PC-3 (cell line): ENCODE measurements at regions of chr6 and their contacts with region 1.

Region 1: GRCh38 chr6:3742426-3743344 is 8.8 kb downstream of the PXDC1 start:
- DNase-seq: peak; percentile 91
- ATAC-seq: peak; percentile 83
- H3K4me3 ChIP-seq: peak overlapping the region; percentile 58
- H3K27ac ChIP-seq: no peak overlapping the region
- H3K4me1 ChIP-seq: peaks cover 27% of the 10 kb centered on the region
- H3K27me3 ChIP-seq: no peaks in the 10 kb centered on the region
- CTCF ChIP-seq: peak; percentile 98

Region 2: DNA sequence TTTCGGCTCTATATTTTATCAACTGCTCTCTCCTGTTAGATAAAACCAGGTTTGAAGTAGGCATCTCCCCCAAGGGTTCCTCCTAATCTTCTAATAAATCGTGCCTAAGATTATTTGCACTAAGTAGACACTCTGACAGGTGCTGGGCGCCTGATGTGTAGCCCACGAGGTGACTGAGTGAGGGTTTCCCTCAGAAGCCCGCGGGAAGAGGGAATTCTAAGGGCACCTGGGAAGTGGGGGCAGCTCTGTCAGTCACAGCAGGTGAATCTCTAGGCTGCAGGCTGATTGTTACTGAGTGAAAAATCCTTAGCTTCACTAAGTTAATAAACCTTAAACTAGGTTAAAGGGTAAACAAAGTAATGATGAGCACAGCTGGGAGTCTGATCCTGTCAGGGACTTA is 59.4 kb before region 1 on chr6:
- CTCF ChIA-PET with region 1: no interaction called
- POLR2A ChIA-PET with region 1: no interaction called
- intact Hi-C with region 1: no loop called
- DNase-seq: no peak
- ATAC-seq: no peak
- H3K4me3 ChIP-seq: no peak overlapping the region
- H3K27ac ChIP-seq: no peak overlapping the region
- H3K4me1 ChIP-seq: no peaks in the 10 kb centered on the region
- H3K27me3 ChIP-seq: peaks cover 4% of the 10 kb centered on the region; the same call in 1 of the 2 replicates
- CTCF ChIP-seq: no peak

Region 3: DNA sequence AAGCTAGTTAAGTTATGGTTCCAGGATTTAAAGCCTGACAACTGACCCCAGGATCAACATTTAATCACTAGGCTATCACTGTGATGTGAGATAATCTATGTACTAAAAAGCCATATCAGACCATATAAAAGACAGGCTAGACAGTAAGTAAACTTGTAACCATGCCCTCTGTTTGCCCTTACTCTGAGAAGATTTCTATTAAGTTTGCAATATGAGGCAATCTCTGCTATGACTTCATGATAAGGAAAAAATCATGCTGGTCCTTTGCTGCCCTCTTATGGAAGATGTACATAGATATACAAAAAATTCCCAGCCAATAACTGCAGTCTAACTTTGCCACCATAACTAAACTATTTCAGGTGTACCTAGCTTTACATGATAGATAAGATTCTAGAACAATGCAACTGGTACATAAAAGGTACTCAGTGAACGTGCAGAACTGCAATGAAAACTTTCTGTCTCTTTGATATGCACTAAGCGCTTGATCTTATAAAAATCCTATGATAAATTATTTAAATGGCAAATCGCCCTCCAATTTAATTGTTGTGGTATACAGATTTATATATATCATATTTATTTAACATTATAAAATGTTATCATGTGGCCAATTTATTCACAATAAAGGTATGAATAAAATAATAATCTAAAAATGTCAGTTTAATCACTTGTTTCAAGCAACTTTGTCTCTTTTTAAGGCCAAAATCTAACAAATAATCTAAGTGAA is 265.8 kb after region 1 on chr6:
- CTCF ChIA-PET with region 1: no interaction called
- POLR2A ChIA-PET with region 1: no interaction called
- intact Hi-C with region 1: loop called (anchors 1 kb)
- DNase-seq: peak; percentile 79
- ATAC-seq: peak; percentile 73
- H3K4me3 ChIP-seq: no peak overlapping the region
- H3K27ac ChIP-seq: no peak overlapping the region
- H3K4me1 ChIP-seq: peaks cover 14% of the 10 kb centered on the region
- H3K27me3 ChIP-seq: no peaks in the 10 kb centered on the region
- CTCF ChIP-seq: peak; percentile 72